ENCODE measurements at regions of chr16 and their contacts with region 1.

Region 1: GRCh38 chr16:15888072-15888976 is at the start of gene CEP20:
- DNase-seq: peak; percentile 99 to 100
- ATAC-seq: peak; percentile 97 to 100 (median 98)
- H3K4me3 ChIP-seq: peak within 1 kb of the TSS; percentile 100
- H3K4me3 Mint-ChIP-seq: peak within 1 kb of the TSS; percentile 98
- H3K27ac ChIP-seq: peak within 1 kb of the TSS; percentile 86
- H3K27ac Mint-ChIP-seq: peak within 1 kb of the TSS; percentile 90 to 96
- H3K4me1 ChIP-seq: peaks cover 20% of the 10 kb centered on the region
- H3K4me1 Mint-ChIP-seq: peaks cover 30 to 32% of the 10 kb centered on the region in 2 donors
- H3K27me3 ChIP-seq: no peaks in the 10 kb centered on the region
- H3K27me3 Mint-ChIP-seq: no peaks in the 10 kb centered on the region
- CTCF ChIP-seq: no peak
- total RNA-seq, gene CEP20: 21.4 to 23.2 (median 23.1) TPM

Region 2: DNA sequence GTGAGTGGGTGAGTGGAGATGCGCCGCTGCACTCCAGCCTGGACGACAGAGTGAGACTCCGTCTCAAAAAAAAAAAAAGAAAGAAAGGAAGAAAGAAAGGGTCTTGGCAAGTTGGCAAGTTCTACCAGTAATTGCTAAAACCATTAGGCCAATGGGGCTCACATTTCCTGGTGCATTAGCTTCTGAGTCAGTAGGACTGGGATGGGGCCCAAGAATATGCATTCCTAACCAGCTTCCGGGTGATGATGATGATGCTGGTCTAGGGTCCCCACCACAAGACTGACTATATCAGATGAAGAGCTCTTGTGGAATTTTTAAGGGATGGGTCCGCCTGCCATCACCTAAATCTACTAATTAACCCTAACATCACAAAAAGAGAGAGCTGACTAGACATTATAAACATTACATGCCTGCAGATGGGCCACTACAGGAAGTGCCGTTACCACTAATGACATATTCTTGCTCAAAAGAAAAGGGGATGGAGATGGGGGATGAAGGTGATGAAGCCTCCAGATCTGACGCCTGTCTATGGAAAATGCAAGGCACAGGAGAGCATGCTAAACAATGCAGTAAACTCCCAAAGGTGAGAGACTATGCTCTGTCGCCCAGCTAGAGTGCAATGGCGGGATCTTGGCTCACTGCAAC is 44.6 kb before region 1 on chr16:
- intact Hi-C with region 1: no loop called
- DNase-seq: no peak
- ATAC-seq: no peak
- H3K4me3 ChIP-seq: no peak overlapping the region
- H3K4me3 Mint-ChIP-seq: no peak overlapping the region
- H3K27ac ChIP-seq: no peak overlapping the region
- H3K27ac Mint-ChIP-seq: no peak overlapping the region
- H3K4me1 ChIP-seq: no peaks in the 10 kb centered on the region
- H3K4me1 Mint-ChIP-seq: no peaks in the 10 kb centered on the region
- H3K27me3 ChIP-seq: no peaks in the 10 kb centered on the region
- H3K27me3 Mint-ChIP-seq: peaks cover 0 to 2% of the 10 kb centered on the region in 2 donors
- CTCF ChIP-seq: no peak

Region 3: DNA sequence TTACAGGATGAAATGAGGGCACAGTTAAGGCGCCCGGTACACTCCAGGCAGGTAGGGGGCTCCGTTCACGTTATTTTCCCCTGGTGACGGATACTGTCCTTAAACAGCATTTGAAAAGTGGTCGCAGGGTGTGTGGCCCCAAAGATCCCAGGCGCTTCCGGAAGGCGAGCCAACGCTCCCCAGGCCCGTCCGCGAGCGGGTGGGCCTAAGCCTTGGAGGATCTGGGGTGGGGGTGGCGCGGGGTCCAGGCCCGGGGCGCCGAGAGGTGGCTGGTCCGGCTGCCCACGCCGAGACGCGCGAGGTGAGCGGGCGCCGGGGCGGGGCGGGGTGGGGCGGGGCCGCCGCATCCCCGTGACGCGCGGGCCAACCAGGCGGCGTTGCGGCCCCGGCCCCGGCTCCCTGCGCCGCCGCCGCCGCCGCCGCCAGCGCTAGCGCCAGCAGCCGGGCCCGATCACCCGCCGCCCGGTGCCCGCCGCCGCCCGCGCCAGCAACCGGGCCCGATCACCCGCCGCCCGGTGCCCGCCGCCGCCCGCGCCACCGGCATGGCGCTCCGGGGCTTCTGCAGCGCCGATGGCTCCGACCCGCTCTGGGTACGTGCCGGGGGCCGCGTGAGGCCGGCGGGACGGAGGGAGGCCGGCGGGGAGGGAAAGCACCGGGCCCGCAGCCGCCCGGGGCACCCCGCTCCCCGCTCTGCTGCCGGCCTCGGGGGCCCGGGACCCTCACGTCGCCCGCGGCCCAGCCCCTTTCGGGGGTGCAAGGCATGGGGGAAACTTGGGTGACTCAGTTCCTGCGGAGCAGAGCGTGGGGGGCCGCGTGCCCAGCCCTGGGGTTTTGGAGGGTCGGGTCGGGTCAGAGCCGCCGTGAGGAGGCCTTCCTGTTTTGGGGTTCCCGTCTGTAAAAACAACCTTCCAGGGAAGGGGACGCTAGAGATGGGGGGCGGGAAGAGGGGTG is 61.2 kb after region 1 on chr16 and contains the start of gene ABCC1:
- intact Hi-C with region 1: loop called (anchors 5 kb)
- DNase-seq: peak; percentile 63 to 82
- ATAC-seq: peak; percentile 66 to 85 (median 80)
- H3K4me3 ChIP-seq: peak within 1 kb of the TSS; percentile 72
- H3K4me3 Mint-ChIP-seq: peak within 1 kb of the TSS; percentile 92
- H3K27ac ChIP-seq: peak within 1 kb of the TSS; percentile 68
- H3K27ac Mint-ChIP-seq: peak within 1 kb of the TSS; percentile 83 to 88
- H3K4me1 ChIP-seq: peaks cover 46% of the 10 kb centered on the region
- H3K4me1 Mint-ChIP-seq: peaks cover 22 to 34% of the 10 kb centered on the region in 2 donors
- H3K27me3 ChIP-seq: no peaks in the 10 kb centered on the region
- H3K27me3 Mint-ChIP-seq: no peaks in the 10 kb centered on the region
- CTCF ChIP-seq: no peak
- total RNA-seq, gene ABCC1: 24.5 to 53.9 (median 27.9) TPM